HEK293 (cell line): ENCODE measurements at regions of chr3 and their contacts with region 1.

Region 1: DNA sequence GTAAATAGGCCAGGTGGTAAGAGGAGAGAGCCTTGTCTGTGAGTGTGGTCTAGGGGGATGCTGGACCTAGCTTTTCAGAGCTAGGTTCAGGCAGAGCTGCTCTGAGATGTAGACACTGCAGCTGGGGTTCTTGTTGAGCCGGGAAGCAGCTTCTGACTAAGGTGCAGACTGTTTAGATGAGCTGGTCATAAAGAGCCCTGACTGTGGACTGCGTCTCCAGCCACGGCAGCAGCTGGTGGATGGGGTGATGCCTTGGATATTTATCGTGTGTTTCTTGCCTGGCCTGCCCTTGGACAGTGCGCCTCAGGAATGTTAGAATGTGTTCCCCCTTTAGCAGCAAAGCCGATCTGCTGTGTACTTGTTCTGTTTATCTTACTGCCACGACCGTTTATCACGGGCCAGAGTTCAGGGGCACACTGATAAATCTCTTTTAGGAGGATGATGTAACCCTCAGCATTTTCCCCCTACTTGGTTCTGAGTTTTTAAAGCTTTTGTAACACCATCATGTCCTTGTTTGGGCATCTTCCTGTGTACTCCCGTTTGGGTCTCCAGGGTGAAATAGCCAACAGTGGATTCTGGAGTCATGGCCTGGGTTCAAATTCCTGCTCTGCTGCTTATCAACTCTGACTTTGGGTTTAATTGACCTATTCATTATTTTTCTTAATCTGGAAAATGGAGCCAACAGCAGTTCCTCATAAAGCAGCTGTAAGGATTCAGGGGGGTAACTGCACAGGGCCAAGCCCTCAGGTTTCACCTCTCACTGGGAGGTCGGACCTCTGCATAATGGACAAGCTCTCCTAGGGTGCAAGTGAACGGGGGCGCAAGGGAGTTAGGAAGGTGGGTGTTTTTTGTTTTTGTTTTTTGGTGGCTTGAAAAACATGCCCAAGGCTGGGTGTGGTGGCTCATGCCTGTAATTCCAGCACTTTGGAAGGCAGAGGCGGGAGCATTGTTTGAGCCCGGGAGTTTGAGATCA is 51.4 kb downstream of the FLNB start:
- H3K4me3 ChIP-seq: no peak overlapping the region
- H3K27ac ChIP-seq: no peak overlapping the region
- H3K4me1 ChIP-seq: peaks cover 12% of the 10 kb centered on the region; the same call in 1 of the 2 replicates
- CTCF ChIP-seq: no peak

Region 2: GRCh38 chr3:58008140-58009025 is 51.3 kb before region 1 on chr3 and contains the start of gene FLNB:
- CTCF ChIA-PET with region 1: interaction called, 4 read pairs
- POLR2A ChIA-PET with region 1: interaction called, 10 read pairs
- H3K4me3 ChIP-seq: peak within 1 kb of the TSS; percentile 99
- H3K27ac ChIP-seq: peak within 1 kb of the TSS; percentile 72; the same call in 1 of the 2 replicates
- H3K4me1 ChIP-seq: 0 out of 2 replicates have a peak, but pooled peaks cover 3% of the 10 kb centered on the region
- CTCF ChIP-seq: no peak; the same call in 1 of the 2 replicates

Region 3: DNA sequence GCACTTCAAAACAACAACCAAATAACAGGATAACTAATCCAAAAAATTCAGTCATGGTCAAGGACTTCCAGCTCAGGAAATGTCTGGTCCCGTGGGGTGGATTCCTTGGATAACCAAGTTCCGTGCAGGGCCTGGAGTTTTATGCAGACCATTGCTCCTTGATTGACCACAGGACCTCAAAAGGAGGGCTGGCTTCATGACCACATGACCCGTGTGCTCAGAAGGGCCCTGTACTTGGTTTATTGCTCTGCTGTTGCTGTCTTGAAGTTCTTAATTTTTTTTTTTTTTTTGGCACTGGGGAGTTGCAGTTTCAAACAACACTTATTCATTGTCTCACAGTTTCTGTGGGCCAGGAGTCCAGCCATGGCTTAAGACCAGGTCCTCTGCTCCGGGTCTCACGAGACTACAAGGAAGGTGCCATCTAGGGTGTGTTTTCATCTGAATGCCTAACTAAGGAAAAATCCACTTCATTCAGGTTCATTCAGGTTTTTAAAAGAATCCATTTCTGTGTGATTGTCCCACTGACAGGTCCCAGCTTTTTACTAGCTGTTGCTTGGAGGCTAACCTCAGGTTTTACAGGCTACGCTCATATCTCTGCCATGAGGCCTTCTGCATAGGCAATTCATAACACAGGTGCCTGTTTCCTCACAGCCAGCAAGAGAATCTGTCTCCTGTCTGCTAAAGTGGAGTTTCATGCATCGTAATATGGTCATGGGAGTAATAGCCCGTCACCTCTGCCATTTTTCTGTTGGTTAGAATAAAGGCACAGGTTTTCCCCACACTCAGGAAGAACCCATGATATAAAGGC is 13.9 kb after region 1 on chr3:
- CTCF ChIA-PET with region 1: no interaction called
- POLR2A ChIA-PET with region 1: no interaction called
- H3K4me3 ChIP-seq: no peak overlapping the region
- H3K27ac ChIP-seq: no peak overlapping the region
- H3K4me1 ChIP-seq: 0 out of 2 replicates have a peak, but pooled peaks cover 5% of the 10 kb centered on the region
- CTCF ChIP-seq: no peak

Region 4: DNA sequence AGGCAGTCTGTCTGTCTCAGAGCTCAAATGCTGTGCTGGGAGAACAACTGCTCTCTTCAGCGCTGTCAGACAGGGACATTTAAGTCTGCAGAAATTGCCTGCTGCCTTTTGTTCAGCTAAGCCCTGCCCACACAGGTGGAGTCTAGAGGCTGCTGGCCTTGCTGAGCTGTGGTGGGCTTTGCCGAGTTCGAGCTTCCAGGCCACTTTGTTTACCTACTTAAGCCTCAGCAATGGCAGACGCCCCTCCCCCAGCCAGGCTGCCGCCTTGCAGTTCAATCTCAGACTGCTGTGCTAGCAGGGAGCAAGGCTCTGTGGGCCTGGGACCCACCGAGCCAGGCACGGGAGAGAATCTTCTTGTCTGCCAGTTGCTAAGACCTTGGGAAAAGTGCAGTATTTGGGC is 221.4 kb after region 1 on chr3:
- CTCF ChIA-PET with region 1: no interaction called
- POLR2A ChIA-PET with region 1: no interaction called
- H3K4me3 ChIP-seq: no peak overlapping the region
- H3K27ac ChIP-seq: no peak overlapping the region
- H3K4me1 ChIP-seq: no peaks in the 10 kb centered on the region
- CTCF ChIP-seq: no peak